ENCODE measurements at regions of chr17 and their contacts with region 1.

Region 1: GRCh38 chr17:38735161-38735997 is 5.2 kb downstream of the CISD3 start:
- DNase-seq: peak; percentile 70 to 71
- ATAC-seq: peak in 7 of 8 donors; percentile 1 to 49 (median 27)
- H3K4me3 ChIP-seq: no peak overlapping the region
- H3K27ac ChIP-seq: peak overlapping the region in 4 of 10 donors; percentile 9 to 36 (median 15)
- H3K4me1 ChIP-seq: peaks cover 17 to 60% (median 42%) of the 10 kb centered on the region in 9 donors
- H3K27me3 ChIP-seq: no peaks in the 10 kb centered on the region
- CTCF ChIP-seq: peak; percentile 83 to 88 (median 85)

Region 2: DNA sequence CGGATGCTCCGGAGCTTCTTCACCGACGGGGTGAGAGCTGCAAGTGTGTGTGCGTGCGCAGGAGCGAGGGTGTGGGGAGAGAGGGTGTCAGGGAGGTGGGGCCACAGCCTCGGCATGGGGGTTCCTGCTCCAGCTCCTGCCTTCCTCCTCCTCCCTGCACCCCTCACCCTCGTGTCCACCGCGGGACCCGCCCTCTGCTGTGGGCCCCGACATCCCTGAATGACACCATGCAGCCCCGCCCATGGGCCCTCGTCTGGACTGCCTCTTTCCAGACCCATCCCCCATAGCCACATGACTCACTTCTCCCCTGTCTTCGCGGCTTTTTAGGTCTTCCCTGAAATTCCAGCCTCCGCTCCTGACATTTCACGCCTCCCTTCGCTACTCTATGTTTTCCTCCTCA is 265.5 kb before region 1 on chr17:
- intact Hi-C with region 1: no loop called
- DNase-seq: no peak
- ATAC-seq: no peak
- H3K4me3 ChIP-seq: no peak overlapping the region
- H3K27ac ChIP-seq: peak overlapping the region in 1 of 10 donors; percentile 13
- H3K4me1 ChIP-seq: peaks cover 21 to 52% (median 32%) of the 10 kb centered on the region in 9 donors
- H3K27me3 ChIP-seq: no peaks in the 10 kb centered on the region
- CTCF ChIP-seq: no peak

Region 3: GRCh38 chr17:38674749-38675615 is 60.4 kb before region 1 on chr17 and contains the start of gene EPOP:
- intact Hi-C with region 1: loop called (anchors 1 to 5 kb)
- DNase-seq: peak; percentile 87 to 88
- ATAC-seq: peak; percentile 85 to 92 (median 90)
- H3K4me3 ChIP-seq: peak within 1 kb of the TSS; percentile 41 to 66 (median 59)
- H3K27ac ChIP-seq: peak within 1 kb of the TSS in 2 of 10 donors; percentile 28 to 56
- H3K4me1 ChIP-seq: peaks cover 8 to 37% (median 30%) of the 10 kb centered on the region in 9 donors
- H3K27me3 ChIP-seq: peaks cover 19 to 63% (median 58%) of the 10 kb centered on the region in 7 donors
- CTCF ChIP-seq: peak in 2 of 9 donors; percentile 4
- total RNA-seq, gene EPOP: 0.25 to 1.3 (median 0.64) TPM

Region 4: DNA sequence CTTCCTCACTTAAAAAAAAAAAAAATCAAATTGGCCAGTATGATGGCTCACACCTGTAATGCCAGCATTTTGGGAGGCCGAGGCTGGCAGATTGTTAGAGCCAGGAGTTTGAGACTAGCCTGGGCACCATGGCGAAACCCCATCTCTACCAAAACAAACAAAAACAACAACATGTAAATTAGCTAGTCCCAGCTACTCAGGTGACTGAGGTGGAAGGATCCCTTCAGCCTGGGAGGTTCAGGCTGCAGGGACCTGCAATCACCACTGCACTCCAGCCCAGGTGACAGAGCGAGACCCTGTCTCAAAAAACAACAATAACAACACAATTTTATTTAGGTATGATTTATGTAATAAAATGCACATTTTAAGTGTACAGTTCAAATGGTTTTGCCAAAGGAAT is 54.3 kb before region 1 on chr17:
- intact Hi-C with region 1: loop called (anchors 1 to 5 kb)
- DNase-seq: no peak
- ATAC-seq: no peak
- H3K4me3 ChIP-seq: no peak overlapping the region
- H3K27ac ChIP-seq: no peak overlapping the region
- H3K4me1 ChIP-seq: peaks cover 0 to 21% (median 9%) of the 10 kb centered on the region in 9 donors
- H3K27me3 ChIP-seq: peaks cover 0 to 2% (median 0%) of the 10 kb centered on the region in 7 donors
- CTCF ChIP-seq: no peak

Measured in heart right ventricle (tissue), 16 donors.